A673 (cell line): ENCODE measurements at regions of chr7 and their contacts with region 1.

Region 1: DNA sequence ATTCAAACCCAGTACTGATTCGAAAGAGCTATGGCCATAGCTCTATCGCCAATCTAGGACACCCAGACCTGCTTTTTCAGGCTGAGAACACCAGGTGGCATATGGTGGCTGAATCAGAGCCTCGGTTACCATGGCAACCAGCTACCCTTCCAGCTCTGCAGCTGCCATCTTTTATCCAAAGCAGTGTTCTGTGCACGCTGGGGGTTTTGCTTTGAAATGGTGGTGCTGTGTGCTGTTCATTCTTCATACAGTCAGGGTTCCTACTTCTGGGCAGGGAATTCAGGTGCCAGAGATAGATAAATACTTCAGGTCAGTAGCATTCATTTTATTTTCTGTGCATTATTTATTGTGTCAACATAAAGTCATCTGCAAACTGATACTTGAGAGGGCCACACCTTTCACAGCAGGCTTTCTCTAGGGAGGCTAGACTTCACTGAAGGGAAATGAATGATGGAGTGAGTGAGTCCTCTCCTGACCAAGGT is 85.4 kb downstream of the AKR1D1 start:
- DNase-seq: peak; percentile 91
- H3K4me3 ChIP-seq: no peak overlapping the region
- H3K27ac ChIP-seq: no peak overlapping the region
- H3K4me1 ChIP-seq: no peaks in the 10 kb centered on the region
- H3K27me3 ChIP-seq: no peaks in the 10 kb centered on the region
- CTCF ChIP-seq: peak; percentile 72

Region 2: DNA sequence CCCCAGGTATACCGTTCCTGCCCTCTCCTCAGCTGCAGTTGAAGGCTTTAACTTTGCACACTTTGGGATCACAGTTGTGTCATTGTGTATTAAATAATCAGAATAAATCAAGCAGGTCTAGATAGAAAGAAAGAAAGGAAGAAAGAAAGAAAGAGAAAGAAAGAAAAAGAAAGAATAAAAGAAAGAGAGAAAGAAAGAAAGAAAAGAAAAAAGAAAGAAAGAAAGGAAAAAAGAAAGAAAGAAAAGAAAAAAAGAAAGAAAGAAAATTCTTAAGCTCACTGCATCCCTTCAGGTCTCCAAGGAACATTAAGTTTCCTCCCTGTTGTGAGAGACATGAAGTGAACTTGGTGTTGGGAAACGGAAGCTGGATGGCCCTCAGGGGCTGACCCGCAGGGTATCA is 281.2 kb after region 1 on chr7:
- CTCF ChIA-PET with region 1: no interaction called
- POLR2A ChIA-PET with region 1: no interaction called
- intact Hi-C with region 1: no loop called
- DNase-seq: no peak
- H3K4me3 ChIP-seq: no peak overlapping the region
- H3K27ac ChIP-seq: no peak overlapping the region
- H3K4me1 ChIP-seq: no peaks in the 10 kb centered on the region
- H3K27me3 ChIP-seq: no peaks in the 10 kb centered on the region
- CTCF ChIP-seq: no peak

Region 3: GRCh38 chr7:138459413-138460175 is 298.0 kb after region 1 on chr7:
- CTCF ChIA-PET with region 1: no interaction called
- POLR2A ChIA-PET with region 1: no interaction called
- intact Hi-C with region 1: loop called (anchors 10 kb)
- DNase-seq: no peak
- H3K4me3 ChIP-seq: peak overlapping the region; percentile 67
- H3K27ac ChIP-seq: no peak overlapping the region
- H3K4me1 ChIP-seq: no peaks in the 10 kb centered on the region
- H3K27me3 ChIP-seq: no peaks in the 10 kb centered on the region
- CTCF ChIP-seq: no peak; the same call in 1 of the 2 replicates

Region 4: GRCh38 chr7:138865843-138866242 is 704.2 kb after region 1 on chr7:
- CTCF ChIA-PET with region 1: no interaction called
- POLR2A ChIA-PET with region 1: no interaction called
- intact Hi-C with region 1: loop called (anchors 10 kb)
- DNase-seq: no peak
- H3K4me3 ChIP-seq: no peak overlapping the region
- H3K27ac ChIP-seq: no peak overlapping the region
- H3K4me1 ChIP-seq: no peaks in the 10 kb centered on the region
- H3K27me3 ChIP-seq: no peaks in the 10 kb centered on the region
- CTCF ChIP-seq: peak; percentile 50